Prostate gland (tissue), 2 donors: ENCODE measurements at regions of chr9 and their contacts with region 1.

Region 1: DNA sequence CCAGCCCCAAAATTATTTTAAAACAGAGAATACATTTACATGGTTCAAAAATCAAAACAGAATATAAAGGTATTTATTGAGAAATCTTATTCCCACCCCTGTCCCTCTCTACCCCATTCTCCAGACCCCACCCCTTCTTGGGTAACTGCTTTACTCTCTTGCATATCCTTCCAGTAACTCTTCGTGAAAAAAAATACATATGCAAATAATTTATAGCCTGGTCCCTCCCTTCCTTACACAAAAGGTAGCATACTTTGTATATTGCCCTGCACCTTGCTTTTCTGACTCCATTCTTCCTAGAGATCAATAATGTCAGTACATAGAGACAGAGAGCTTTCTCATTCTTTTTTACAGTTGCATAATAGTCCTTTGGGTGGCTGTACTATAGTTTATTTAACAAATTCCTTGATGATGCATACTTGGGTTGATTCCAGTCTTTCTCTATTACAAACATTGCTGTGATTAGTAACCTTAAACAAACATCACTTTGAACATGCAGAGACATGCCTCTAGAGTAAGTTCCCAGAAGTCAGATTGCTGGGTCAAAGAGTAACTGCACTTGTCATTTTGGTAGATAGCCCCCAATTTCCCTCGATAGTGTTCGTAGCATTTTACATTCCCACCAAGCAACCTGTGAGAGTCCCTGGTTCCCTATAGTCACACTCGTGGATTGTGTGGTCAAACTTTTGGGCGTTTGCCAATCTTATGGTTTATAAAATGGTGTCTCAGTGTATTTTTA is 47.8 kb downstream of the STOM start:
- DNase-seq: no peak
- H3K4me3 ChIP-seq: no peak overlapping the region
- H3K27ac ChIP-seq: peak overlapping the region; percentile 87 to 94
- H3K4me1 ChIP-seq: no peaks in the 10 kb centered on the region
- H3K27me3 ChIP-seq: no peaks in the 10 kb centered on the region
- CTCF ChIP-seq: no peak
- POLR2A ChIP-seq: no peak

Region 2: GRCh38 chr9:121213136-121213806 is 108.9 kb before region 1 on chr9:
- intact Hi-C with region 1: loop called (anchors 5 kb)
- DNase-seq: peak; percentile 86
- H3K4me3 ChIP-seq: no peak overlapping the region
- H3K27ac ChIP-seq: no peak overlapping the region
- H3K4me1 ChIP-seq: no peaks in the 10 kb centered on the region
- H3K27me3 ChIP-seq: no peaks in the 10 kb centered on the region
- CTCF ChIP-seq: peak; percentile 76 to 97 (median 91)
- POLR2A ChIP-seq: no peak

Region 3: DNA sequence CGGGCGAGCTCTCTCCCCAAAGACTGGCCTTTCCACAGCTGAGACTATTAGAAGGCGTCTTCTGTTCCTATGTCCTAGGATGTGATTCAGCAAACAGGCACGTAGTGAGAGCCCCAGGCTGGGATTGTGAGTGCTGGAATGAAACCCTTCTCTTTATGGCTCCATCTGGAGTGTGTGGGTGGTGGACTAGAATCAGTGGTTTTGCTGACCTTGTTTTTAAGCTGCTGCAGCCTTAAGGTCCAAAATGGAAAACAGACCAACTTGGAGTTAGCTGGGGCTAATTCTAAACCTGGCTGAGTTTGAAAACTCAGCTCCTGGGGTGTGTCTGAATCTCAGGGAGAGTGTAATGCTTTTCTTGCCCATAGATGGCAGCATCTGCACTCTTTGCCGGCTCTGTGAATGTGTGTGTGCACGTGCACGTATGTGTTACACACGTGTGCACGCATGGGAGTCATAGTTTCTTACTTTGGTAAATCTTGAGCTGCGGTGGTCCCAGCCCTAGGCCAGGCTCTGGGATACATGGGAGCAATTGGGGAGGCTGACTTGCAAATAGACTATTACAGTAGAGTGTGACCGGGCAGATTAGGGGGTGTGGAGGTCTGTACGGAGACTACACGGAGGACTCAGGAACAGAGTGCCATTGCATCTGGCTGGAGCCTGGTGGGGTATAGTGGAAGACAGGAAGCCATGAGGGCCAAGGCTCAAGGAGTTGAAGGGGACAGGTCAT is 43.5 kb before region 1 on chr9:
- intact Hi-C with region 1: loop called (anchors 5 kb)
- DNase-seq: peak; percentile 39
- H3K4me3 ChIP-seq: no peak overlapping the region
- H3K27ac ChIP-seq: peak overlapping the region; percentile 85 to 90
- H3K4me1 ChIP-seq: no peaks in the 10 kb centered on the region
- H3K27me3 ChIP-seq: no peaks in the 10 kb centered on the region
- CTCF ChIP-seq: peak; percentile 45 to 90 (median 71)
- POLR2A ChIP-seq: peak; percentile 35

Region 4: GRCh38 chr9:121286973-121287741 is 35.0 kb before region 1 on chr9:
- intact Hi-C with region 1: loop called (anchors 5 kb)
- DNase-seq: peak; percentile 73
- H3K4me3 ChIP-seq: no peak overlapping the region
- H3K27ac ChIP-seq: peak overlapping the region; percentile 85 to 90
- H3K4me1 ChIP-seq: peaks cover 9% of the 10 kb centered on the region
- H3K27me3 ChIP-seq: no peaks in the 10 kb centered on the region
- CTCF ChIP-seq: peak in 1 of 4 experiments; percentile 21
- POLR2A ChIP-seq: peak; percentile 26

Region 5: DNA sequence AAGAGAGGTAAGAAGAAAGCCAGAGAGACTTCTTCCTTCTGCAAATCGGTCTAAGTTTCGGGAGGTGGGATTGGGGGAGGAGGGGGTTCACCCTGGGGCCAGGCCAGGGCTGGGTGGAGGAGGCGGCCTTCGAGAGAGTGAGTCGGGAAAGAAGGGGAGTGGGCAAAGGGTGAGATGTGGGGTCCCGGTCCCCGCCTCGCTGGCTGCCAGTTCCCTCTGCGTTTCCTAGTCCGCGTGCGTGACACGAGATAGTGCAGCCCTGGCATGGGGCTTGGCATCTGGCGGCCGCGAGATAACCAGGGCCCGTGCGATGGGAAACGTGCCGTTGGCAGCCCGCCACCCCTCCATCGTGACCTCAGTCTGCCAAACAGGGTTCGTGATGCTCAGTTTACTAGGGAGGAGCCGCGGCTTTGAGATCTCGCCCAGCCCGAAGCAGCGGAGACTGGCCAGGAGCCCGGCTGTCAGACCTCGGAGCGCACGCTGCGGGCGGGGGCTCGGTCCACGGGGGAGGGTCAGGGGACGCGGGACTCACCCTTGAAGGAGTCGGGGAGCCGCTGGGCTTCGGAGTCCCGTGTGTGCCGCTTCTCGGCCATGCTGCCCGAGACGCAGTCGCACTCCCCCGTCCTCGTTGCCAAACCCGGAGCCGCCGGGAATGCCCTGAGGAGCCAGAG is 47.5 kb after region 1 on chr9 and contains the start of gene STOM:
- intact Hi-C with region 1: loop called (anchors 2 kb)
- DNase-seq: peak; percentile 69
- H3K4me3 ChIP-seq: peak within 1 kb of the TSS; percentile 37 to 48
- H3K27ac ChIP-seq: peak within 1 kb of the TSS; percentile 88 to 90
- H3K4me1 ChIP-seq: no peaks in the 10 kb centered on the region
- H3K27me3 ChIP-seq: no peaks in the 10 kb centered on the region
- CTCF ChIP-seq: peak in 1 of 4 experiments; percentile 5
- POLR2A ChIP-seq: peak; percentile 97
- total RNA-seq, gene STOM: 64.3 to 85.1 TPM

Region 6: GRCh38 chr9:121399883-121400607 is 77.8 kb after region 1 on chr9:
- intact Hi-C with region 1: loop called (anchors 5 kb)
- DNase-seq: peak; percentile 42
- H3K4me3 ChIP-seq: no peak overlapping the region
- H3K27ac ChIP-seq: no peak overlapping the region
- H3K4me1 ChIP-seq: no peaks in the 10 kb centered on the region
- H3K27me3 ChIP-seq: no peaks in the 10 kb centered on the region
- CTCF ChIP-seq: peak; percentile 37 to 93 (median 88)
- POLR2A ChIP-seq: no peak